IMR-90 (cell line): ENCODE measurements at regions of chr14 and their contacts with region 1.

Region 1: GRCh38 chr14:53411125-53411524 is 258.0 kb upstream of the DDHD1 start:
- DNase-seq: peak; percentile 94
- ATAC-seq: peak; percentile 82
- H3K4me3 ChIP-seq: no peak overlapping the region
- H3K27ac ChIP-seq: peak overlapping the region; percentile 4; the same call in 1 of the 2 replicates
- H3K4me1 ChIP-seq: peaks cover 10% of the 10 kb centered on the region
- H3K27me3 ChIP-seq: no peaks in the 10 kb centered on the region
- CTCF ChIP-seq: no peak
- POLR2A ChIP-seq: no peak
- RAD21 ChIP-seq: no peak

Region 2: DNA sequence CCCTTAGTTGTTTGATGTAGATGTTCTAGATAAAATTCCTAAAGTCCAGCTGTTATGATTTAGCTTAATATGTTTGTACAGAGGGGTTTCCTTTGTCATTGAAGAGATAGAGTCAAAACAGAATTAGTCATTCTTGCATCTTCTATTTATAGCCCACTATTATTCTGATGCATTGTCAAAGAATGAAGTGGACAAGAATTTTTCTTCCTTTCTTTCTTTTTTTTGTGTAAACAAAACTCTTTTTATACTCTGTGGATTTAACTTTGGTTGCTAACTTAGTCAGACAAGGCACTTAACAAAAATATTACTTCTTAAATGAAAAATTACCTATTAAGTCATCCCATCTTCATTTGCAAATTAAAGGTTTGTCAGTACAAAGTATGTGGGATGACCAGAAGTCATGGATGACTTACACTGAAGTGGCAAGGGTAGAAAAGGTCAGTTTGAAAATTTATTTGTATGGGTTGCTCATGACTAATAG is 42.4 kb before region 1 on chr14:
- CTCF ChIA-PET with region 1: no interaction called
- POLR2A ChIA-PET with region 1: no interaction called
- dilution Hi-C with region 1: no loop called
- in situ Hi-C with region 1: no loop called
- intact Hi-C with region 1: loop called (anchors 2 kb)
- DNase-seq: peak; percentile 88
- ATAC-seq: peak; percentile 81
- H3K4me3 ChIP-seq: no peak overlapping the region
- H3K27ac ChIP-seq: no peak overlapping the region
- H3K4me1 ChIP-seq: peaks cover 17% of the 10 kb centered on the region
- H3K27me3 ChIP-seq: peaks cover 2% of the 10 kb centered on the region; the same call in 1 of the 2 replicates
- CTCF ChIP-seq: no peak
- POLR2A ChIP-seq: no peak
- RAD21 ChIP-seq: no peak